ENCODE measurements at regions of chr3 and their contacts with region 1.

Region 1: DNA sequence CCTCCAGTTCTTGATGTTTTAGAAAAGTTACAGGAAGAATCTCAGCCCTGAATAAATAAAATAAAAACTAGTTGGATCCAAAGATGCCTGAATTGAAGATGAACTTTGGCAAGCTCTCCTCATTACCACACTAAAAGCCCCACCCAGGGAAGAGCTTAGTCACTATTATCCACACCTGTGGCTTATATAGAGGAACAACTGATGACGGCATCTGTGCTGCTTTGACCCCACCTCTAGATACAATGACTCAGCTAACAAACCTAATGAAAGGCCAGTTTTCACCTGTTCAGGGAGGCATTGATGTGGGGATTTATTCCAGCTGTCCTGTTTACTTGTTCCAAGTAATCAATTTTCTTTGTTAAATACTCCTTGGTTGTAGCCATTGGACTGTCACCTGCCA is 604.7 kb upstream of the EPHA6 start:
- DNase-seq: no peak
- ATAC-seq: no peak
- H3K4me3 ChIP-seq: no peak overlapping the region
- H3K4me3 Mint-ChIP-seq: no peak overlapping the region
- H3K27ac ChIP-seq: no peak overlapping the region
- H3K27ac Mint-ChIP-seq: no peak overlapping the region
- H3K4me1 ChIP-seq: no peaks in the 10 kb centered on the region
- H3K4me1 Mint-ChIP-seq: no peaks in the 10 kb centered on the region
- H3K27me3 ChIP-seq: no peaks in the 10 kb centered on the region
- H3K27me3 Mint-ChIP-seq: no peaks in the 10 kb centered on the region
- CTCF ChIP-seq: no peak

Region 2: GRCh38 chr3:95797081-95797480 is 412.6 kb before region 1 on chr3:
- intact Hi-C with region 1: no loop called
- DNase-seq: no peak
- ATAC-seq: no peak
- H3K4me3 ChIP-seq: no peak overlapping the region
- H3K4me3 Mint-ChIP-seq: no peak overlapping the region
- H3K27ac ChIP-seq: no peak overlapping the region
- H3K27ac Mint-ChIP-seq: no peak overlapping the region
- H3K4me1 ChIP-seq: no peaks in the 10 kb centered on the region
- H3K4me1 Mint-ChIP-seq: no peaks in the 10 kb centered on the region
- H3K27me3 ChIP-seq: no peaks in the 10 kb centered on the region
- H3K27me3 Mint-ChIP-seq: no peaks in the 10 kb centered on the region
- CTCF ChIP-seq: no peak

Region 3: DNA sequence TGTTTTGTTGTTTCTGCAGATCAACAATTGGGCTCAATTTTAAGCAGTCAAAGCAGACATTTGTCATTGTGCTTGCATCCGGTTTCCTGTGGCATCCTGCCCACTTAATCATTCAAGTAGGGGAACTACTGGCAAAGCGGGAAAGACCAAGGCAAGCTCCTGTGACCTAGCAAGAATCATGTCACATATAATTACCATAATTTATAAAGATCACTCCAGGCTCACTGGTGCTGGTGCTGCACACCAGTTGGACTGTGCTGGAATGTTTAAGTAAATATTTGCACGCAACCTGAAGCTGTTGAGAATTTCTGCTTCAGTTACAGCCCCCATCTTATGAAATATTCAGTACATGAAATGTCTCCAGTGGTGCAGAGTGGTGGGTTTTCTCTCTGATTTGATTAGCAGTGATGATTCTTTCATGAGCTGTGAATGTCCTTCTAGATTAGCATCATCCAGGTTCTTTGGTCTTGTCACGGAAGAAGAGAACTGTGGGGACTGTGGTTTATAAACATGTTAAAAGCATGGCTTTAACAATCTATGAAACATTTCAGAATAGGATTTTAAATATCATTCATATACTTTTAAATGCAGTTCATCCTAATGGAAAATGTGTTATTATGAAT is 16.7 kb before region 1 on chr3:
- intact Hi-C with region 1: loop called (anchors 1 kb)
- DNase-seq: no peak
- ATAC-seq: no peak
- H3K4me3 ChIP-seq: no peak overlapping the region
- H3K4me3 Mint-ChIP-seq: no peak overlapping the region
- H3K27ac ChIP-seq: no peak overlapping the region
- H3K27ac Mint-ChIP-seq: no peak overlapping the region
- H3K4me1 ChIP-seq: no peaks in the 10 kb centered on the region
- H3K4me1 Mint-ChIP-seq: no peaks in the 10 kb centered on the region
- H3K27me3 ChIP-seq: no peaks in the 10 kb centered on the region
- H3K27me3 Mint-ChIP-seq: no peaks in the 10 kb centered on the region
- CTCF ChIP-seq: no peak

Measured in natural killer cell (primary cell).